GM23248 (cell line): ENCODE measurements at regions of chrX and their contacts with region 1.

Region 1: GRCh38 chrX:138756234-138756633 is 44.7 kb upstream of the FGF13 start:
- DNase-seq: peak; percentile 83
- H3K4me3 ChIP-seq: no peak overlapping the region
- H3K27ac ChIP-seq: no peak overlapping the region
- H3K4me1 ChIP-seq: no peaks in the 10 kb centered on the region
- H3K27me3 ChIP-seq: no peaks in the 10 kb centered on the region

Region 2: DNA sequence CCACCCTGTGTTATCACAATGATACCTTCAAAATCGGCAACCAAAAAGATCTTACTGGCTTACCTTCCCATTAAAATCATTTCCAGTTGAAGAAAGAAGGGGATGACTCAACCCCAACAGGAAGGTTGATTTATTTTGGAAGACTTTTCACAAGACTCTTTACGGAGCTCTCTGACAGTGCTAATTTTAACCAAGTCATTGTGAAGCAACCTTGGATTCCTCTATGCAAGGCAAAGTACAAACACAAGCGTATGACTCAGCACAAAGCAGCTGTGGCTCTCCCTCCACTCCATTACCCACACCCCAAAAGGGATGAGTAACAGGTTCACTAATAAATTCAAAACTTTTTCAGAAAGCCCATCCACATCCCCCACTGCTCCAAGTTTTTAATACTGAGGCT is 169.1 kb after region 1 on chrX:
- in situ Hi-C with region 1: no loop called
- DNase-seq: peak; percentile 92
- H3K4me3 ChIP-seq: no peak overlapping the region
- H3K27ac ChIP-seq: peak overlapping the region; percentile 77
- H3K4me1 ChIP-seq: peaks cover 21% of the 10 kb centered on the region
- H3K27me3 ChIP-seq: no peaks in the 10 kb centered on the region

Region 3: GRCh38 chrX:139559383-139560042 is 803.3 kb after region 1 on chrX:
- in situ Hi-C with region 1: loop called (anchors 25 kb)
- DNase-seq: peak; percentile 65
- H3K4me3 ChIP-seq: no peak overlapping the region
- H3K27ac ChIP-seq: no peak overlapping the region
- H3K4me1 ChIP-seq: peaks cover 7% of the 10 kb centered on the region
- H3K27me3 ChIP-seq: no peaks in the 10 kb centered on the region

Region 4: DNA sequence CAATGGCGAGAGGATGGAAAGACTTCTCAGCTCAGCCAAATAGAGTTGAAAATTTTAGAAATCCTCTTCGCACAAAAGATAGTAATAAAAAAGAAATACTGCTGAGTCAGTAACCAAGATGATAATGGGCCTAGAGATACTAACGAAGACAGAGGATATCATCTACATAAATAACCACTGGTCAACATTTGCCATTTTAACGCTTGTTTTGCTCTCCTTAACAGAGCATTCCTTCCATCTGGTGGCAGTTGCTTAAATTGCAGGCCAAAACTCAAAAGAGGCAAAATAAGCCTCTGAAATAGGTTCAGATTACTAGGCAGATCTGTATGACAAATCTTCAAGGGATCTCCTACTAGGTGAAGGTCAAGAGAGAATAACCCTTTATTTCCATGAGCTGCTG is 1003.4 kb after region 1 on chrX:
- in situ Hi-C with region 1: loop called (anchors 25 kb)
- DNase-seq: peak; percentile 38
- H3K4me3 ChIP-seq: no peak overlapping the region
- H3K27ac ChIP-seq: no peak overlapping the region
- H3K4me1 ChIP-seq: no peaks in the 10 kb centered on the region
- H3K27me3 ChIP-seq: no peaks in the 10 kb centered on the region

Region 5: GRCh38 chrX:139967300-139967699 is 1211.1 kb after region 1 on chrX:
- in situ Hi-C with region 1: loop called (anchors 25 kb)
- DNase-seq: peak; percentile 28
- H3K4me3 ChIP-seq: no peak overlapping the region
- H3K27ac ChIP-seq: no peak overlapping the region
- H3K4me1 ChIP-seq: no peaks in the 10 kb centered on the region
- H3K27me3 ChIP-seq: no peaks in the 10 kb centered on the region